Heart right ventricle (tissue), 16 donors: ENCODE measurements at regions of chr13 and their contacts with region 1.

Region 1: DNA sequence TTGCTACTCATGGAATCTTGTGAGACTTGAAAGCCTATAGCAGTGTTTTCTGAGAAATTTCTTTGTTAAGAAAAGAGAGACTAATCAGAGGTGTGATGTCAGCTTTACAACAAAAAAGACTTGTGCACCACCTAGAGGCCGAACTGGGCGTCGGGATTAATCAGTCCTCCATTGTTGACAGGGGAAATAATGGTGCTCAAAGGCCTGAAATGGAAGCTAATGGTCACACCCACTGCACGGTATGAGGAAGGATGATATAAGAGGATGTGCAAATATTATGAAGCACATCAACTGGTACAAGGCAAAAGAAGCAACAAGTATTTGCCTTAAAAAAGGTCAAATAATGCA is 480.2 kb upstream of the MIR17HG start:
- DNase-seq: peak; percentile 31 to 34
- ATAC-seq: peak in 7 of 8 donors; percentile 58 to 79 (median 74)
- H3K4me3 ChIP-seq: no peak overlapping the region
- H3K27ac ChIP-seq: no peak overlapping the region
- H3K4me1 ChIP-seq: no peaks in the 10 kb centered on the region
- H3K27me3 ChIP-seq: no peaks in the 10 kb centered on the region
- CTCF ChIP-seq: peak; percentile 40 to 65 (median 61)

Region 2: DNA sequence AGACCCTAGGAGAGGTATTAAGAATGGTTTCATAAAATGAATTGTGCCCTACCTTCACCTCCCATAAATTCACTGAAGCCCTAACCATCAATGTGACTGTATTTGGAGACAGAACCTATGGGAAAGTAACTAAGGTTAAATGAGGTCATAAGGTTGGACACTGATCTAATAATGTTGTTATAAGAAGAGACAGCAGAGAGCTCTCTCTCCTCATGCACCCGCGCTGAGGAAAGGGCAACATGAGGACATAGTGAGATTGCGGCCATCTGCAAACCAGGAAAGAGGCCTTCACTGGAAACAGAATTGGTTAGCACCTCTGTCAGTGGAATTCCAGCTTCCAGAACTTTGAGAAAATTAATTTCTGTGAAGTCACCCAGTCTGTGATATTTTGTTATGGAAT is 916.0 kb before region 1 on chr13:
- intact Hi-C with region 1: loop called in 2 of 10 experiments (anchors 5 to 10 kb)
- DNase-seq: no peak
- ATAC-seq: peak in 3 of 8 donors; percentile 49 to 79 (median 69)
- H3K4me3 ChIP-seq: no peak overlapping the region
- H3K27ac ChIP-seq: no peak overlapping the region
- H3K4me1 ChIP-seq: no peaks in the 10 kb centered on the region
- H3K27me3 ChIP-seq: no peaks in the 10 kb centered on the region
- CTCF ChIP-seq: peak in 4 of 9 donors; percentile 11 to 26 (median 14)

Region 3: GRCh38 chr13:90084684-90085290 is 782.5 kb before region 1 on chr13:
- intact Hi-C with region 1: loop called in 1 of 10 experiments (anchors 10 kb)
- DNase-seq: no peak
- ATAC-seq: no peak
- H3K4me3 ChIP-seq: no peak overlapping the region
- H3K27ac ChIP-seq: no peak overlapping the region
- H3K4me1 ChIP-seq: no peaks in the 10 kb centered on the region
- H3K27me3 ChIP-seq: no peaks in the 10 kb centered on the region
- CTCF ChIP-seq: no peak